ENCODE measurements at regions of chr6 and their contacts with region 1.

Region 1: DNA sequence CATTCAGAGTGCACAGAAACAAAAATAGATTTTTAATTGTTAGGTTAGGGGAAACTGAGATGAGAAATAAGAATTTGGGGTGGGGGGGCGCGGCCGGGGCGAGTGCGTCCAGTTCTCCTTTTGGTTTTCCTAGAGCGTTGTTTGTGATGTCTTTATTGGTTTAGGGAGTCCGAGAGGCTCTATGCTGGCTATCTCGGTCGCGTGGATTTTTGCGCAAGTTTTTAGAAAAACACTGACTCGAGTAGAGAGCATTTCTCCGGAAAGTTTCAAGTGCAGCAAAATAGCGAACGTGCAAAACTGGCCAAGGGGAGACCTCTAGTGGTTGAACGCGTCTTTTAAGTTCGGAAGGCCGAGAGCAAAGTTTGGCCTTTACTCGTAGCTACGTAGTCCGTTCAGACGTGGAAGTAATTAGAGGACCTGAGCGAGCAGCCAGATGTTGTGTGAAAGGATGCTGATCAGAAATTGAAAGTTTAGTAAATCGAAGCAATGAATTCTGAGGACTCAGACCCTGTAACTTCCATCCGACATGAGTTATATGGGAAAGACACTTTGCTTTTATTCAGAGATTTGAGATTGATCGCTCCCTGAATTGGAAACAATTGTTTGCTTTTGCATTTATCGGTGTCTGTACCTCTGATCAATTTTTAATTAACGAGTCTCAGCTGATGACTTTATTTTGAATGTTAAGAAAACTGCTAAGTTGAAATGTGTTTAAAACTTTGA is 2.7 kb downstream of the L3MBTL3 start:
- DNase-seq: peak; percentile 50
- ATAC-seq: peak; percentile 58
- H3K4me3 Mint-ChIP-seq: peak overlapping the region; percentile 97
- H3K27ac Mint-ChIP-seq: peak overlapping the region; percentile 96
- H3K4me1 Mint-ChIP-seq: peaks cover 25% of the 10 kb centered on the region
- H3K27me3 Mint-ChIP-seq: no peaks in the 10 kb centered on the region
- CTCF ChIP-seq: peak; percentile 29

Region 2: GRCh38 chr6:129498950-129499842 is 521.9 kb before region 1 on chr6:
- CTCF ChIA-PET with region 1: no interaction called
- POLR2A ChIA-PET with region 1: no interaction called
- intact Hi-C with region 1: loop called (anchors 1 kb)
- DNase-seq: no peak
- ATAC-seq: peak; percentile 79
- H3K4me3 Mint-ChIP-seq: peak overlapping the region; percentile 29
- H3K27ac Mint-ChIP-seq: peak overlapping the region; percentile 15
- H3K4me1 Mint-ChIP-seq: peaks cover 15% of the 10 kb centered on the region
- H3K27me3 Mint-ChIP-seq: no peaks in the 10 kb centered on the region
- CTCF ChIP-seq: peak; percentile 81

Region 3: GRCh38 chr6:129672881-129673643 is 348.0 kb before region 1 on chr6:
- CTCF ChIA-PET with region 1: no interaction called
- POLR2A ChIA-PET with region 1: interaction called, 11 read pairs
- intact Hi-C with region 1: loop called (anchors 1 kb)
- DNase-seq: no peak
- ATAC-seq: no peak
- H3K4me3 Mint-ChIP-seq: peak overlapping the region; percentile 32
- H3K27ac Mint-ChIP-seq: peak overlapping the region; percentile 85
- H3K4me1 Mint-ChIP-seq: peaks cover 27% of the 10 kb centered on the region
- H3K27me3 Mint-ChIP-seq: no peaks in the 10 kb centered on the region
- CTCF ChIP-seq: no peak

Region 4: DNA sequence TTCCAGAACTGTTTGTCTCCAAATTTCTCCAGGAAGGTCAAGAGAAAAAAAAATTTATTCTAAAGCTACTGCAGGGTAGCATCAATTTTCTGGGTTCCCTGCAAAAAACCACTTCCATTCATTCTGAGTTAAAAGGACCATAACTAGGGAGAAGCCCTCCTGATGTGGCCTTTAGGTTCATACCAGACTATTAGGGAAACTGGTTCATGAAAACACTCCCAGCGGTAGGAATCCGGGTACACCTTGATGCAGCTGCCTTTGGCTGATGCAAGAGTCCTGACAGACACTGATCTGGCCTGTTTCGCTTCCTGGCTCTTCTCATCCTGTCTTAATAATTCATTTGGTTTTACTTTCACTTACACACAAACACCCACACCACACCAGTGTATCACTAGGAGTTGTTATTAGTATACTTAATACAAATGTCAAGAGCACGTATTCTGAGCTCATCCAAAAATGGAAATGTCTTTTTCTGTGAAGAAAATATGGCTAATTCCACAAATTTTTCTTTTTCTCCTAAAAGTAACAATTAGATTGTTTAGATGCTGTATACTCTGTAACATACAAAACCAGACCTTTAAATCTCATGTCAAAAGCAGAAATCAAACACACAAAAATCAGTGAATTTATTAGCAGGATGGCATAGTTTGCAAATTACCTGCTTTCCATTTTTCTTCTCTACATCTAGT is 272.7 kb before region 1 on chr6:
- CTCF ChIA-PET with region 1: interaction called, 8 read pairs
- POLR2A ChIA-PET with region 1: interaction called, 23 read pairs
- intact Hi-C with region 1: loop called (anchors 1 kb)
- DNase-seq: no peak
- ATAC-seq: peak; percentile 89
- H3K4me3 Mint-ChIP-seq: peak overlapping the region; percentile 66
- H3K27ac Mint-ChIP-seq: peak overlapping the region; percentile 94
- H3K4me1 Mint-ChIP-seq: peaks cover 50% of the 10 kb centered on the region
- H3K27me3 Mint-ChIP-seq: no peaks in the 10 kb centered on the region
- CTCF ChIP-seq: no peak

Region 5: GRCh38 chr6:129893640-129894039 is 127.4 kb before region 1 on chr6:
- CTCF ChIA-PET with region 1: interaction called, 5 read pairs
- POLR2A ChIA-PET with region 1: no interaction called
- intact Hi-C with region 1: loop called (anchors 1 kb)
- DNase-seq: no peak
- ATAC-seq: no peak
- H3K4me3 Mint-ChIP-seq: no peak overlapping the region
- H3K27ac Mint-ChIP-seq: no peak overlapping the region
- H3K4me1 Mint-ChIP-seq: peaks cover 22% of the 10 kb centered on the region
- H3K27me3 Mint-ChIP-seq: no peaks in the 10 kb centered on the region
- CTCF ChIP-seq: no peak

Measured in activated B cell treated with CpG ODN at 0.5 μM for 24 hours (primary cell).